Caco-2 (cell line): ENCODE measurements at regions of chr13 and their contacts with region 1.

Region 1: DNA sequence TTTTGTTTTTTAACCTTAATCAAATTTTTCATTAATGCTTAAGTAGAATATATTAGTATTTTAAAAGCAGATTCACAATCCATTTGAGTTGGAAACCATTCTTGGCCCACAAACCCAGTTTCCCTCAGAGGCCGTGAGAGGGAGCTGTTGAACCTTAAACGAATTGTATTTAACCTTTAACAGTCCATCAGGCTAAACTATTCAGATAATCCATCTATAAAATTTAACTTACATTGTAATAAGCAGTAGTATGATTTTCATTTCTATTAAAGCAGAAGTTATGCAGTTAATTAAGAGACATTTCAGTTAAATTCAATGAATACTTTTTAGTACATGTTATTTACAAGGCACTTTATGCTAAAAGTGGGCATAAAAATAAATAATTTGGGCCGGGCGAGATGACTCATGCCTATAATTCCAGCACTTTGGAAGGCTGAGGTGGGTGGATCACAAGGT is 123.1 kb upstream of the C1QTNF9B start:
- DNase-seq: peak in 1 of 2 experiments; percentile 46
- H3K4me3 ChIP-seq: no peak overlapping the region
- H3K4me3 Mint-ChIP-seq: no peak overlapping the region
- H3K27ac Mint-ChIP-seq: no peak overlapping the region
- H3K4me1 ChIP-seq: no peaks in the 10 kb centered on the region; the same call in 1 of the 2 replicates
- H3K4me1 Mint-ChIP-seq: no peaks in the 10 kb centered on the region
- H3K27me3 ChIP-seq: no peaks in the 10 kb centered on the region
- H3K27me3 Mint-ChIP-seq: no peaks in the 10 kb centered on the region
- CTCF ChIP-seq: peak; percentile 56 to 77

Region 2: GRCh38 chr13:24220086-24220703 is 199.8 kb after region 1 on chr13:
- CTCF ChIA-PET with region 1: interaction called, 7 read pairs
- POLR2A ChIA-PET with region 1: no interaction called
- intact Hi-C with region 1: loop called (anchors 1 kb)
- DNase-seq: peak; percentile 64 to 82
- H3K4me3 ChIP-seq: no peak overlapping the region
- H3K4me3 Mint-ChIP-seq: no peak overlapping the region
- H3K27ac Mint-ChIP-seq: peak overlapping the region; percentile 80
- H3K4me1 ChIP-seq: peaks cover 17% of the 10 kb centered on the region
- H3K4me1 Mint-ChIP-seq: peaks cover 18% of the 10 kb centered on the region
- H3K27me3 ChIP-seq: no peaks in the 10 kb centered on the region
- H3K27me3 Mint-ChIP-seq: no peaks in the 10 kb centered on the region
- CTCF ChIP-seq: peak; percentile 69 to 71